AG04450 (cell line): ENCODE measurements at regions of chr6 and their contacts with region 1.

Region 1: DNA sequence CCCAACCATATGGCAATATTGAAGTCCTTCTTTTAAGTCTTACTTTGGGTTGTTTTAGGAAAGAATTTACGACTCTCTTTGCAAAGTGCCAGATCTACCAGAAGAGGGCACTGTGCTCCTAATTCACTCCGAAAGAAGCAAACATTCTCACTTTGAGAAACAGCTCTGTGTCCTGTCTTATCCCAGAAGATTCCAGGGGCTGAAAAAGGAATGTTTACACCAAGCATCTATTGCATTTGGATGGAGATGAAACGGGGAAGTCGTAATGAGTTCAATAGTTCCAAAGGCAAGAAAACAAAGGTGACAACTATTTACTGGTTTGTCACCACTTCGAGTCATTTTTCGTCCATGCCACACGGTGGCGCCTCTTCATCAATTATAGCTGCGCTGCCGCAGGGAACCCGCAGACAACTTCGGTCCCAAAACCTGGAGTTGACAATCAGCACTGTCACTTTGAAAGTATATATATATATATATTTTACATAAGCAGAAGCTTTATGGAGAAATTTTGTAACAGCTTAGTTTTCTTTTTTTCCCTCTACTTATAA is 121.6 kb downstream of the MOXD1 start:
- DNase-seq: peak; percentile 54
- H3K4me3 ChIP-seq: peak overlapping the region; percentile 55
- H3K27ac ChIP-seq: no peak overlapping the region
- H3K27me3 ChIP-seq: no peaks in the 10 kb centered on the region
- CTCF ChIP-seq: peak; percentile 76

Region 2: DNA sequence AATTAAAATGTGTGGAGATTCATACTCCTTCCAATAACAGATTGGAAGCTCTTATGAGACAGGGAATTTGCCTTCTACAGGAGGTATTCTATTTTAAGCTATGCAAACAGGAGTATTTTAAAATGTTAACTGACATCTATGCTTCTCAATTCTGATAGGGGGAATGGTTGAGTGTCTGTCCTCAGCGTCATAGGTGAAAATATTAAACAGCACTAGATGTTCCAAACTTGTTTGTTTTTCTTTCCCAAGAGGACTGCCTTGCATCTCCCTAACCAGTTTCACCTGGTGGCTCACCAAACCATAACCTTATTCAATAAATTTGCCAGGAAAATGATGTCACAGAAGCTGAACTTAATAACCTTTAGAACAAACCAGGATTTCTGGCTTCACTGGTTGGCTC is 731.2 kb before region 1 on chr6:
- CTCF ChIA-PET with region 1: no interaction called
- POLR2A ChIA-PET with region 1: no interaction called
- DNase-seq: no peak
- H3K4me3 ChIP-seq: no peak overlapping the region
- H3K27ac ChIP-seq: no peak overlapping the region
- H3K27me3 ChIP-seq: peaks cover 5% of the 10 kb centered on the region
- CTCF ChIP-seq: no peak

Region 3: GRCh38 chr6:131694831-131695426 is 584.7 kb before region 1 on chr6:
- CTCF ChIA-PET with region 1: interaction called, 15 read pairs
- POLR2A ChIA-PET with region 1: no interaction called
- DNase-seq: peak; percentile 50
- H3K4me3 ChIP-seq: no peak overlapping the region
- H3K27ac ChIP-seq: no peak overlapping the region
- H3K27me3 ChIP-seq: no peaks in the 10 kb centered on the region
- CTCF ChIP-seq: peak; percentile 98

Region 4: DNA sequence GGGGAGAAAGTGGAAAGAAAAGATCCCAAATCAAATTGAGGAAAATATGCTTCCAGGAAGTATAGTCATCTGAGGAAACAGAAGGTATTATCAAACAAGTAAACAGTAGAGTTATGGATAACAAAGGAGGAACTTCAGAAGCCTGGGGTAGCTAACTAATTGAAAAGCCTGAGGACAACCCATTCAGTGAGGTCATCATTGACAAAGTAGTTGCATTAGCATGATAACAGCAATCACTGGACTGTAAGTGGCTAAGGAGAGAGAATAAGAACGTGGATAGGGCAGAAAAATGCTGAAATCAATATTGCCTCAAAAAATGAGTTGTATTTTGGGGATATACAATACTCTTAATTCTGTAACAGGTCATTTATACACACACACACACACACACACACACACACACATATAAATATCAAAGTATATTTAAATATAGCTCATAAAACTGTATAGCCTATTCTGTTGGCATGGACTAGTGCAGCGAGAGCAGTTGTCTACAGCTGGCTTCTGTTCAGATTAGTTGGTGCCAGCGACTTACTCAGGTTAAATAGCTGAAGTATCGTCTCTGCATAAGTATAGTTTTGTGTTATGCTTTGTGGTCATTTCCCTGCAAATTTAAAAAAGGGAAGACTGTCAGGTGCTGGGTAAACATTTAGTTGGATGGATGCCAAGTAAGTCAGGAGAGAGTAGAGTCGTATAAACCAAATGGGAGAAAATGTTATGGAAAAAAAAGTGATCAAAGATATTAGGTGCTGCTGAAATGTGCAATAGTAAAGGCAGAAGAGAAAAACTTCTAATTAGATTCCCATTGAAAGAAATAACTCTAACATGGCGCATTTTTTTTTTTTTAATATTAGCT is 535.0 kb before region 1 on chr6:
- CTCF ChIA-PET with region 1: no interaction called
- POLR2A ChIA-PET with region 1: no interaction called
- DNase-seq: no peak
- H3K4me3 ChIP-seq: no peak overlapping the region
- H3K27ac ChIP-seq: no peak overlapping the region
- H3K27me3 ChIP-seq: no peaks in the 10 kb centered on the region
- CTCF ChIP-seq: no peak

Region 5: DNA sequence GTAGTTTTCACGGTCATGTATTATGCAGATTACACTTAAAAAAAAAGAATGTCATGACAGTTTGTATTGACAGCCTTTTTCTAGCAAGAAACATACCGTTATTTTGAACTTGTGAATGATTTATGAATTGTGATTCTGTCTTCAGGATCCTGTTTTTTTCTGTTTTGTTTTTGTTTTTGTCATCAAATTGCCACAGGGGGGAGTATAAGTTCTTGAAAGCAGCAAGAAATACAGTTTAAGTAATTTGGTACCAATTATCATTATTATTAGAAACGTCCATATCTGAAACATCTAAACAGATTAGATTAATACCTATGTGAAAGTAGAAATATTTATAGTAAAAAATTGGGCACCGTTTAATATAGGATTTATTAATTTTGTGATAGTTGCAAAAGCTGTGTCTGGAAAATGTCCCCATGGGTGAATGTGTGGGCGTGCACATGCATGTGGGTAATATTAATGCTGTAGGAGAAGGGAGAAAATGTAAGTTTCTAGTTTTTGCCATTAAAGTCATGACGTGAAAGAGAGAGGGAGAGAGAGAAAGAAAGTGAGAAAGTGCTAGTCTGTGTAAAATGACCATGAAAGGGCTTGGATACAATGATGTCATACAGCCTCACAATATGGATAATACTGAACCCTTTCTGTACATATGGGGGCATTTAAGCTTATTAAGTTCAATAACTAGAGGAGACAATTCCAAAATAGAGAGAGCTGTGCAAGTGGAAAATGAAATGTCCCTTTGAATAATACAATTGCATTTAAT is 319.1 kb before region 1 on chr6:
- CTCF ChIA-PET with region 1: interaction called, 21 read pairs
- POLR2A ChIA-PET with region 1: no interaction called
- DNase-seq: no peak
- H3K4me3 ChIP-seq: no peak overlapping the region
- H3K27ac ChIP-seq: no peak overlapping the region
- H3K27me3 ChIP-seq: no peaks in the 10 kb centered on the region
- CTCF ChIP-seq: peak; percentile 36

Region 6: DNA sequence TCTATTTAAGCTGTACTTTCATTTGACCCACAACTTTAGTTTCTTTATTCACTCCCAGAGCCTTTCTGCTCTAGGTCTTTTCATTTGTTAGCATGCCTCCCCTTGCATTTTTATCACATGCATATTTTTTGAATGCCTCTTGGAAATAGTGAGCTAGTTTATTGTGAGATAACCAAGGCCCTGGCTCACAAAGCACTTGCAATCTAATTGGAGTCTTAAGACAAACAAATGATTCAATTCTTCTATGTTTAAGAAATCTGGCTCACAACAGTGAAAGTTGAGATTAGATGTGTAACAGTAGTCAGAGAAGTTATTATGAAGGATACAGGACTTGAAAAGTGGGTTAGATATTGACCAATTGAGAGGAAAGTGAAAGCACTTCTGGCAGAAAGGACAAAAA is 51.8 kb before region 1 on chr6:
- CTCF ChIA-PET with region 1: interaction called, 21 read pairs
- POLR2A ChIA-PET with region 1: no interaction called
- DNase-seq: peak; percentile 81
- H3K4me3 ChIP-seq: no peak overlapping the region
- H3K27ac ChIP-seq: no peak overlapping the region
- H3K27me3 ChIP-seq: no peaks in the 10 kb centered on the region
- CTCF ChIP-seq: no peak

Region 7: GRCh38 chr6:132391391-132392271 is 112.0 kb after region 1 on chr6:
- CTCF ChIA-PET with region 1: interaction called, 19 read pairs
- POLR2A ChIA-PET with region 1: no interaction called
- DNase-seq: peak; percentile 90
- H3K4me3 ChIP-seq: peak overlapping the region; percentile 40
- H3K27ac ChIP-seq: peak overlapping the region; percentile 89
- H3K27me3 ChIP-seq: no peaks in the 10 kb centered on the region
- CTCF ChIP-seq: no peak

Region 8: DNA sequence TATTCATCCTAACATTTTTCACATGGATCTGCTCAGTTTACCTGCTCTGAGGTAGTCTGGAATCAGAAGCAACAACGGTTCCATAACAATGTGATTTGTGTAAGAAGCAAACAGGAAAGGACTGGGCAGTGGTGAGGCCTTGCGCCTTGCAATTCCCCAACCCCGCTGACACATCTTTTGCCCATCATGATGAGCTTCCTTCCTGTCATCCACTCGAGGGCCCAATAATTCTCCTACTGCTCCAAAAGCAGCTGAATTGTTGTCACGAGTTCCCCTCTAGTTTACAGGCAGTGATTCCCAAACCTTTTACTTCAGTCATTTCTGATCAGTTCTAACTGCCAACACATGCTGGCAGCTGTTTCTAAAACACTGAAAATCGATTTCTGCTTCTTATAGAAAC is 210.4 kb after region 1 on chr6:
- CTCF ChIA-PET with region 1: interaction called, 298 read pairs
- POLR2A ChIA-PET with region 1: no interaction called
- DNase-seq: no peak
- H3K4me3 ChIP-seq: no peak overlapping the region
- H3K27ac ChIP-seq: no peak overlapping the region
- H3K27me3 ChIP-seq: no peaks in the 10 kb centered on the region
- CTCF ChIP-seq: no peak

Region 9: GRCh38 chr6:132813173-132813856 is 533.6 kb after region 1 on chr6:
- CTCF ChIA-PET with region 1: interaction called, 10 read pairs
- POLR2A ChIA-PET with region 1: interaction called, 3 read pairs
- DNase-seq: no peak
- H3K4me3 ChIP-seq: peak overlapping the region; percentile 87
- H3K27ac ChIP-seq: peak overlapping the region; percentile 65
- H3K27me3 ChIP-seq: peaks cover 3% of the 10 kb centered on the region
- CTCF ChIP-seq: no peak